ENCODE measurements at regions of chr1 and their contacts with region 1.

Region 1: GRCh38 chr1:241640029-241640818 is at the starts of genes CHML and OPN3:
- DNase-seq: peak; percentile 99

Region 2: GRCh38 chr1:241654019-241654418 is 13.8 kb after region 1 on chr1:
- CTCF ChIA-PET with region 1: no interaction called
- POLR2A ChIA-PET with region 1: interaction called, 10 read pairs
- DNase-seq: no peak